ENCODE measurements at regions of chr12 and their contacts with region 1.

Region 1: DNA sequence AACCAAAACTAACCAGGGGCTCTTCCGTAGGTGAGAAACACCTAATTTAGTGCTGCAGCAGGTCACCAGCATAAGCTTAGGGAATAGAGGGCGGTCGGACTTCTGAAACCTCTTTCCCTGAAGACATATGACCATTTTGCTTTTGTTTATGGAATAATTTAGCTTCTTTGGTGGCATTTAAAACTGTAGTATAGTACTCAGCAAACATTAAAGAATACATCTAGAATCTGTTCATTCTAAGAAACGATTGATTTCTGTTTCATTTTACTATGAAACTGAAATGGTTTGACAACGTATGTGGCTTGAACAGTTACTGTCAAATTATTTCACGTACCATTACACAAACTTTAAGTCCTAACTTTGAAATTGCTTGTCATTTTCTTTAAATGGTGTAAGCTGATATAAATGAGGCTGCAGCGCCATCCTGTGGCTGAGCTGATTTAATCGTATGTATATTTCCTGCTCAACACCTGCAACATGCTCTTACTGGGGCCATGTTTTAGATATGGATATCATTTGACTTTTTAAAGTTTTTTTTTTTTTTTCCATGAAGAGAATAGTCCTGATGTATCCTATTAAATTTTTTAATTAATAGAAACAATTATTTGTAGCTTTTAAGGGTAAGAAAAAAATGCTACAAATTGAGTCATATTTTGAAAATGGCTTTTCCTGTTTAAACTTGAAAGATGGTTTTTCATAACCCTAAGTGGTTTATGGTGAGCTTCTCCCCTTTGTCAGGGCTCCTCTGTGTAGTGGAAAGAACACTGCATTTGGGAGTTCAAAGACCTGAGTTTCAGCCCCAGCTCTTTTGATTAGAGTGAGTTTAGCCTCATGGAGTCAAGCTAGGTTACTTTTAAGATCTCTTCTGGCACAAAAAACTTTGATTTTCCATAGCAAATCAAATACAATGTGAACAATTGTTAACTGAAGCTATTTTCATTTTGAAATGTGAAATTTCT is 27.4 kb downstream of the CFAP54 start:
- H3K4me3 ChIP-seq: no peak overlapping the region
- H3K27ac ChIP-seq: no peak overlapping the region
- H3K4me1 ChIP-seq: no peaks in the 10 kb centered on the region
- CTCF ChIP-seq: peak; percentile 37; the same call in 1 of the 2 replicates

Region 2: DNA sequence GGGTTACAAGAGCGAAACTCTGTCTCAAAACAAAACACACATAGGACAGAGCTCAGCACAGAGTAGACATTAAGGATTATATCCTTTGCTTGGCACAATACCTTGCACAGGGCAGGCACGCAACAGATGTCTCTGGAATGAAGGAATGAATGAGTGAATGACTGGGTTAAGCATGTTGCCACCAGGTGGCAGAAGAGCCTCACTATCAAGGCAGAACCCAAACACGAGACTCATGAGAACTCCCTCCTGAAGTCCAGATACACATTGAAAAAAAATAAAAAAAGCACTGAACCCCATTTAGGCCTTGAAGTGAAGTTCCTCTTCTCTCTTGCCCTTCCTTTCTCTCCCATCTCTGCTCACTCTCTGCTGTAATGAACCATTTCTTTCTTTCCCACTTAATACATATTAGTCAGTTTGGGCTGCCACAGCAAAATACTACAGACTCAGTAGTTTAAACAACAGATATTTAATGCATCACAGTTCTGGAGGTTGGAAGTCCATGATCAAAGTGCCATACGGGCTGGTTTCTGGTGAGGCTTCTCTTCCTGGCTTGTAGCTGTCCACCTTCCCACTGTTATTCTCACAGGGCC is 454.8 kb before region 1 on chr12:
- CTCF ChIA-PET with region 1: interaction called, 38 read pairs
- POLR2A ChIA-PET with region 1: interaction called, 4 read pairs
- H3K4me3 ChIP-seq: no peak overlapping the region
- H3K27ac ChIP-seq: no peak overlapping the region
- H3K4me1 ChIP-seq: no peaks in the 10 kb centered on the region
- CTCF ChIP-seq: peak; percentile 60

Region 3: GRCh38 chr12:96208801-96209549 is 307.8 kb before region 1 on chr12:
- CTCF ChIA-PET with region 1: interaction called, 57 read pairs
- POLR2A ChIA-PET with region 1: interaction called, 3 read pairs
- H3K4me3 ChIP-seq: no peak overlapping the region
- H3K27ac ChIP-seq: no peak overlapping the region
- H3K4me1 ChIP-seq: no peaks in the 10 kb centered on the region
- CTCF ChIP-seq: 0 out of 2 replicates have a peak, but pooled peaks have one; percentile 10

Region 4: GRCh38 chr12:96489103-96490056 is 27.4 kb before region 1 on chr12 and contains the start of gene CFAP54:
- CTCF ChIA-PET with region 1: interaction called, 20 read pairs
- POLR2A ChIA-PET with region 1: no interaction called
- H3K4me3 ChIP-seq: peak within 1 kb of the TSS; percentile 87
- H3K27ac ChIP-seq: no peak within 1 kb of the TSS
- H3K4me1 ChIP-seq: no peaks in the 10 kb centered on the region; the same call in 1 of the 2 replicates
- CTCF ChIP-seq: peak; percentile 92

Region 5: DNA sequence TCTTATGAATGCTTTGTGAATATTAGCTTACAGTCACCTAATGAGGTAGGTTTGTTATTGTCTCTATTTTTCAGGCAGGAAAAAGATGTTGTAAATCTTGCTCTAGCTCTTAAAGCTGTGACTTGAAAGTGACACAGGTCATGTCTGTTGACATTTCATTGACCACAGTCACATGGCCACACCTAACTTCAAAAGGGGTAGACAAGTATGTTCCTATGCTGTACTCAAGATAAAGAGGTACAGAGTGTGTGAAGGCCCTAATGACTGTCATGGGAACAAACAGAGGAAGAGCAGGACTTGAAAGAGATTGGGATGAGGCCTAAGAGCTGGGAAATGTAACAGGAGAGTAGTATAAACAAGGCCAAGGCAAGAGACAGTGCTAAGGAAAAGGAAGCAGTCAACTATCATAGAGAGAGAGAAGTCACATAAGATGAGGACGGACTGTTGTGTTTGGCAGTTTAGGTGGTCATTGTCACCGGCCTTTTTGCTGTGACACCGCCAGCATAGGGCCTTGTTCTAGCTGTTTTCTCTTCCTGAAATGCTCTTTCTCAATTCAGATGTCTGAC is 153.7 kb after region 1 on chr12:
- CTCF ChIA-PET with region 1: no interaction called
- POLR2A ChIA-PET with region 1: no interaction called
- H3K4me3 ChIP-seq: no peak overlapping the region
- H3K27ac ChIP-seq: no peak overlapping the region
- H3K4me1 ChIP-seq: no peaks in the 10 kb centered on the region
- CTCF ChIP-seq: no peak

Measured in HEK293 (cell line).